ENCODE measurements at regions of chr1 and their contacts with region 1.

Region 1: GRCh38 chr1:206030714-206031113 is 7.0 kb upstream of the CTSE start:
- DNase-seq: no peak
- H3K4me3 ChIP-seq: no peak overlapping the region
- CTCF ChIP-seq: peak; percentile 91

Region 2: DNA sequence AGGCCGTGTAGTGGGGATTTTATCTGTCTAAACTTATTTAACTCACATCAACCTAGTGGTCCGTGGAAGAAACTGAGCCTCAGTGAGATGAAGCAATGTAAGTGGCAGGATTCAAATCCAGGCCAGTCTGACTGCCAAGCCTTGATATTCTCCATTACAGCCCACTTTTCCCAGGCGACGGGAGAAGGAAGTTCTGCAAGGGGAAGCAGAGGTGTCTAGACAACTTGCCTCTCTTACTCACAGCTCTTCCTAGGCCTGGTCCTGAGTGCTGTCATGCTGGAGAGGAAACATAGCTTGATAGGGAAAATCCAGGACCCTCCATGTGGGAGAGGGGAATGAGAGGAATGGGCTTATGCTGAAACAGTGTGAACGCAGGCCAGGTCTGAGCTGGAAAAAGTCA is 16.1 kb before region 1 on chr1:
- CTCF ChIA-PET with region 1: interaction called, 13 read pairs
- POLR2A ChIA-PET with region 1: no interaction called
- DNase-seq: no peak
- H3K4me3 ChIP-seq: no peak overlapping the region
- CTCF ChIP-seq: no peak

Region 3: DNA sequence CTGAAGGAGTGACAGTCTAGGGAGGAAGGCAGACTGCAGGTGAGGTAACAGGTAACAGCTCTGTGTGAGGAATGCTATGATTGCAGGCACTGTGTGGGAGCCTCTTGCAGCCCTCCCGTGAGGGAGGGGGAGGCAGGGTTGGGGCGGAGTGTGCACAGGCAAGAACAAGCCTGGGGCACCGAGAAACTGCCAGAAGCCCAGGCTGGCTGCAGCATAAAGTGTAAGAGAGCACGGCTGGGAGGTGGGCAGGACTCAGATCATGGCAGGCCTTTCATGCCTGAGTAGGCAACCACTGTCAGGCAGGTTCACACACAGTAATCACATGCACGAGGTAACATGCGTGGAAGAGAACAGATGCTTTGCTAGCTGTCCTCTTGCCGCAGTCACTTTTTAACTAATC is 10.9 kb after region 1 on chr1:
- CTCF ChIA-PET with region 1: interaction called, 53 read pairs
- POLR2A ChIA-PET with region 1: no interaction called
- DNase-seq: no peak
- H3K4me3 ChIP-seq: no peak overlapping the region
- CTCF ChIP-seq: no peak

Measured in AG04449 (cell line).